ENCODE measurements at regions of chr6 and their contacts with region 1.

Region 1: DNA sequence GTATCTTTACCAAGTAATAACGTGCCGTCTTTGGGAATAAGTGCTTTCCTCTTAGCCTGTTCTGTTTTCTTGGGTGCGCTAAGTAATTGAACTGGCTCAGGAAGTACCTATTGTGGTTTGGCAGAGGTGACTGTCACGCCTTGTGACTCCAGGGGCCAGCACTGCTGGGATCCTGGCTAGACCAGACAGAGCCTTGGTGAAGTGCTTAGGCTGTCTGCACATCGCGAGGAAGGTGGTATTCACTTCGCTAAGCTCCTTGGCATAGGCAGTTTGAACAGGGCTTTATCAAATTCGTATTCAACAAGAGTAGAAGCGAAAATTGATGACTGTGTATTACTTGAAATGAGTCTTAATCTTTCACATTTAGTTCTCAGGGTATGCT is 17.6 kb downstream of the PRDM1 start:
- DNase-seq: peak; percentile 71
- H3K4me3 Mint-ChIP-seq: peak overlapping the region; percentile 91
- H3K27ac Mint-ChIP-seq: peak overlapping the region; percentile 96
- H3K4me1 Mint-ChIP-seq: peaks cover 79% of the 10 kb centered on the region
- H3K27me3 Mint-ChIP-seq: no peaks in the 10 kb centered on the region

Region 2: DNA sequence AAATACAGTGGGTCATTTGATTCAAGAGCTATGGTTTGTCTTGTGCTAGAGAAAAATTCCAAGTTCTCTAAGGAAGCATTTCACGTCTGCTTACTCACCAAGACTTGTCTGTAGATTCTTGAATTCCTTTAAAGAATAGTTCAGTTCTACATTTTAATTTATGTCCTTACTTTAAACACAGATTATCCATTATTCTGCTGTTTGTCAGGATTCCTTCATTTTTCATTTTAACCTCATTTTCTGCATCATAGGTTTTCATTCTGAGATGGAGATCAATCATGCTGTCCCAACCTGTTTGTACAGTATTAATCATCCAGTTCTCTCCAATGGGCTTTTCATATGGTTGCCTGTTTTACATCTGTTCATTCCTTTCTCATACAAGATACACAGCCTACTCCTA is 899.4 kb before region 1 on chr6:
- CTCF ChIA-PET with region 1: no interaction called
- POLR2A ChIA-PET with region 1: no interaction called
- intact Hi-C with region 1: no loop called
- DNase-seq: no peak
- H3K4me3 Mint-ChIP-seq: no peak overlapping the region
- H3K27ac Mint-ChIP-seq: no peak overlapping the region
- H3K4me1 Mint-ChIP-seq: no peaks in the 10 kb centered on the region
- H3K27me3 Mint-ChIP-seq: peaks cover 7% of the 10 kb centered on the region

Region 3: GRCh38 chr6:106092279-106092678 is 11.4 kb before region 1 on chr6:
- CTCF ChIA-PET with region 1: interaction called, 38 read pairs
- POLR2A ChIA-PET with region 1: interaction called, 236 read pairs
- intact Hi-C with region 1: no loop called
- DNase-seq: no peak
- H3K4me3 Mint-ChIP-seq: peak overlapping the region; percentile 90
- H3K27ac Mint-ChIP-seq: peak overlapping the region; percentile 30
- H3K4me1 Mint-ChIP-seq: peaks cover 82% of the 10 kb centered on the region
- H3K27me3 Mint-ChIP-seq: peaks cover 3% of the 10 kb centered on the region

Region 4: DNA sequence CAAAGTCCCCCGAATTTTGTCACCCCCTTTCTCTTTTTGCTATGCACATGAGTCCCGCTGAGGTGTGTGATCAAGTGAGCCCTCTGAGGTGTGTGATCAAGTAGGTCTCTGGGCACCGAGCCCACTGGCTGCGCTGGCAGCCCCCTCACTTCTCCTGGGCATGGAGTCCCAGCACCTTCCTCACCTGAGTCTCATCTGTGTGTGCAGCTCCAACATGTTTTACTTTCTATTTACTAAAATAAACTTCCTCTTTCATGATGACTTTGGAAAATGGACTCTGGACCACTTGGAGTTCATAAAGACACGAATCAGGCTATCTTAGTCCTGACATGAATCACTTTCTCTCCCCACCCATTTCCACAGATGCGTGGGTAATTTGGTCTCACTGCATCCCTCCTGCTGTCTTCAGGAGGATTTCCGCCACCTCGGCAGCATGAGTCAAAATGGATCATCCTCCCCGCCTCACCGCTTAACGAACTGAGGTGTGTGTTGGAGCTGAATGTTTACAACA is 22.3 kb after region 1 on chr6:
- CTCF ChIA-PET with region 1: no interaction called
- POLR2A ChIA-PET with region 1: interaction called, 3 read pairs
- intact Hi-C with region 1: loop called (anchors 1 kb)
- DNase-seq: peak; percentile 88
- H3K4me3 Mint-ChIP-seq: peak overlapping the region; percentile 65
- H3K27ac Mint-ChIP-seq: peak overlapping the region; percentile 80
- H3K4me1 Mint-ChIP-seq: peaks cover 44% of the 10 kb centered on the region
- H3K27me3 Mint-ChIP-seq: peaks cover 3% of the 10 kb centered on the region

Region 5: GRCh38 chr6:106181664-106182418 is 78.1 kb after region 1 on chr6:
- CTCF ChIA-PET with region 1: interaction called, 10 read pairs
- POLR2A ChIA-PET with region 1: interaction called, 68 read pairs
- intact Hi-C with region 1: loop called (anchors 1 kb)
- DNase-seq: no peak
- H3K4me3 Mint-ChIP-seq: no peak overlapping the region
- H3K27ac Mint-ChIP-seq: peak overlapping the region; percentile 46
- H3K4me1 Mint-ChIP-seq: peaks cover 60% of the 10 kb centered on the region
- H3K27me3 Mint-ChIP-seq: no peaks in the 10 kb centered on the region

Region 6: DNA sequence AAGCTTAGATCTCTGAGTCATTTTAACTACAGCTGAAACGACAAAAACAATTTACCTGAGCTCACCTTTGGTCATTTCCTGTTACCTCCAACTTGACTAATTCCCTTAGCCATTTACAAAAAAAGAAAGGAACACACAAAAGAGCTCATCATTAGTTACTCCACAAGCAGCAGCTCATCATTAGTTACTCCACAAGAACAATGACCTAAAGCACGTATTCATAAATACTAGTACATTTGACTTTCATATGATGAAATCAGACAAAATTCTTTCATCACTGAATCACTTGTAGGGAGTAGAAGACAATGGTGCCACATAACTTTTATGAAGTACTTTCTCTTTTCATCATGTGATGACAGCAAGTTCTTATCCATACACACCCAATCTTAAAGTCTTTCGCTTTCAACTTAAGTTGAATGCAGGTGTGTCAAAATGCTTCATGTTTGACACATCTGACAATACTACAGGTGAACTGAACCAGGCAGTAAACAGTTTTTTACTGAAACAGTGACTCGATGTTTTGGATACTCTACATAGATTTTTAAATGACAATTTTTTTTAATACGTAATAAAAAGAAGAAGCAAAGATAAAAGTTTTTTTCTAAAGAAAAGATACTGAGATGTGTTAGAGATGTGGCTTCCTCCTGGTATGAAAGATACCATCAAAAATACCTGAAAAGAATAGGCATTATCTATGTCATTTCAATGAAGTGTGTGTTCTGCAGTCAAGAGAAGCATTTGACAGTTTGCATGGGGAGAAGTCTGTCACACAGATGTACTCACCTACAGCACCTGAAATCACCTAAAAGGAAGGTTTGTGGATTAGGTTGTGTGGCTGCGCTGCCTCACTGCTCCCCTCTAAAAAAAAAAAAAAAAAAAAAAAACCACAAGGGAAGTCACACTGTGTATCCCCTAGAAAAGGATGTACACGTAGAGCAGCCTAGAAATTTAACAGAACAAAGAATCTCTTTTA is 91.5 kb after region 1 on chr6:
- CTCF ChIA-PET with region 1: no interaction called
- POLR2A ChIA-PET with region 1: interaction called, 3 read pairs
- intact Hi-C with region 1: loop called (anchors 1 kb)
- DNase-seq: no peak
- H3K4me3 Mint-ChIP-seq: peak overlapping the region; percentile 43
- H3K27ac Mint-ChIP-seq: peak overlapping the region; percentile 81
- H3K4me1 Mint-ChIP-seq: peaks cover 54% of the 10 kb centered on the region
- H3K27me3 Mint-ChIP-seq: no peaks in the 10 kb centered on the region

Region 7: DNA sequence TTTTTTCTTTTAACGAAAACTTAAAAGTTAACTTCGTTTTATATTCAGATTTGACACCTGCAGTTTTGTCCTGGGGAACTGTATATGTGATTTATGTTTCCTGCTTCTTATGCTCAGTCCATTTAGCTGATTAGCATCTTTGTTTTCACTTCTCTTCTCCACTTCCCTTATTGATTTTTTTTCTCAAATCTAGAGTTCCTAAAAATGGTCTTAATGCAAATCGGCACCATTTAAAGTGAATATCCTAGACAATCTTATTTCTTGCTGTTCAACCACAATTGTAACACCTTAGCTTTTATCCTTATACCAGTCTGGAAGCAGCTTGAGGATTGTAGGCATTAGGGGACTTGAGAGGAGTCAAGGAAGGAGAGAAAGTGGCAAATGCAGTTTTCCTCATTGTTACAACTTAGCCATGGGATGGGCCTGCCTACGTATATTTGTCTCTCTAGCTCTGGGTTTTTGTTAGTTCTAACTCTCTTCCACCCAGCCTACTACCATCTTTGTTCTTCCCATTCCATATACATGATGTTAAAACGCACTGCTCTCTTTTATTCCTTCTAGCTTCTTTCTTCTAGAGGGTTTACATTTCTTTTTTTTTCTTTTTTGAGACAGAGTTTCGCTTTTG is 534.1 kb after region 1 on chr6:
- CTCF ChIA-PET with region 1: no interaction called
- POLR2A ChIA-PET with region 1: no interaction called
- intact Hi-C with region 1: no loop called
- DNase-seq: no peak
- H3K4me3 Mint-ChIP-seq: no peak overlapping the region
- H3K27ac Mint-ChIP-seq: no peak overlapping the region
- H3K4me1 Mint-ChIP-seq: peaks cover 14% of the 10 kb centered on the region
- H3K27me3 Mint-ChIP-seq: no peaks in the 10 kb centered on the region

Measured in activated CD4-positive, alpha-beta memory T cell treated with anti-CD3 and anti-CD28 coated beads for 36 hours (primary cell).